ENCODE measurements at regions of chr1 and their contacts with region 1.

Region 1: DNA sequence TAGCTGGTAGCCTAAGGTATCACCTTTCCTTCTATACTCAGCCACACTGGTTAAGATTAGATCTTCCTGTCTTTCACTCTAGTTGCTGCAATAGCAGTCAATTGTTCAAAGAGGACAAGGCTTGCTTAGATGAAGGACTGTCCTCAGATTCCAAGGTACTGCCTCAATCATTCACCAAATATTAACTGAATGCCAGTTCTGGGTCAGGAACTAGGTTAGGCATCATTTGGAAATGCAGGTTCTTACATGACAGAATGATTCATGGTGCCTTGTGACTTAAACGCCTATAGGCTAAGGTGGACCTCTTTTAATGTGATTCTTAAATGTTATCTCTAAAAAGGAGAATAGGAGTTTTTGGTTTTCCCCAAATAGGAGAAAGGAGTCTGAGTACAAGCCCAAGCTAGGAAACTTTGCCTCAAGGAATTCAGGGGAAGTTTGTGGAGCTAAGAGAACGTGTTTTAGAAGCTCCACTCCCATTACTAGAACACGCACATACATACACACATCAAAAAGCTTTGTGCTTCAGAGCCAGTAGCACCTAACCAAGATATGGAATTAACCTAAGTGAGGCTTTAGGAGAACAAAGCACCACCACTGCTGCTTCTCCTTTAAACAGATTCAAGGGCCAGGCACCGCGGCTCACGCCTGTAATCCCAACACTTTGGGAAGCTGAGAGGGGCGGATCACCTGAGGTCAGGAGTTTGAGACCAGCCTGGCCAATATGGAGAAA is 8.5 kb upstream of the WDR47 start:
- DNase-seq: no peak
- H3K4me3 ChIP-seq: no peak overlapping the region
- H3K27ac ChIP-seq: no peak overlapping the region
- H3K4me1 ChIP-seq: no peaks in the 10 kb centered on the region
- CTCF ChIP-seq: no peak

Region 2: DNA sequence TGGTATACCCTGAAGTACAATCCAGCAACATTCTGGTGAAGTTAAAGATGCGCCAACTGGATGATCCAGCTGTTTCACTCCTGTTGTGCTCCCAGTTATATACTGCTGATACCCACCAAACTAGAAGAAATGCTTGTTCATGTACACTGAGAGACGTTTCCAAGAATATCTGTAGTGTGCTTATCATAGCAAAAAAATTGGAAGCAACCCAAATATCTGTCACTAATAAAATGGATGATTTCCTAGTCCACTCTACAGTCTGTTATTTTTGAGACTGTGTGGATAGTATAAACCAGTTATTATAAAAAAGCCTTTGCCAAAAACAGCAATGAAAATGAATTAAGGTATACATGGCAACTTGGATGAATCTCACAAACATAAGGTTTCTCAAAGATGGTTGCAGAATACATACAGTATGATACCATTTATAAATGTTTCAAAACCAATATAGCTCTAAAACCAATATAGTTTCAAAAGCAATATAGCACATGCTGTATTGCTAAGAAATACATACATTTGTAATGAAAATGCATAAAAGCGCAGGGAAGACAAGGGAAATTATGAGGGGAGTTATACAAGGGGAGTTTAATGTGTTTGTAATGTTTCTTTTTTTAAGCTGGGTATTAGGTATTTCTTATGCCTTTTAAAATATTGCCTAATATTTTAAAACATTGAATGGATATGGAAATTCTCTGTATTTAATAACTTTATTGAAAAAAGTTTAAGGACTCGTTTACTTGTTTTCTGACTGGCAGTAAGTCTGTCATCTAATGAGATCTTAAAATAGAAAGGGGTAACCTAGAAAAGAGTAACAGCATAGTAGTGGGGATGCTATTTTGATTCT is 137.1 kb before region 1 on chr1:
- CTCF ChIA-PET with region 1: no interaction called
- POLR2A ChIA-PET with region 1: no interaction called
- intact Hi-C with region 1: no loop called
- DNase-seq: no peak
- H3K4me3 ChIP-seq: no peak overlapping the region
- H3K27ac ChIP-seq: no peak overlapping the region
- H3K4me1 ChIP-seq: no peaks in the 10 kb centered on the region
- CTCF ChIP-seq: no peak

Region 3: GRCh38 chr1:109183058-109183738 is 132.8 kb after region 1 on chr1:
- CTCF ChIA-PET with region 1: no interaction called
- POLR2A ChIA-PET with region 1: interaction called, 14 read pairs
- intact Hi-C with region 1: no loop called
- DNase-seq: no peak
- H3K4me3 ChIP-seq: no peak overlapping the region
- H3K27ac ChIP-seq: no peak overlapping the region
- H3K4me1 ChIP-seq: no peaks in the 10 kb centered on the region
- CTCF ChIP-seq: no peak